Spleen (tissue), 13 donors: ENCODE measurements at regions of chr1 and their contacts with region 1.

Region 1: GRCh38 chr1:205325334-205325884 is 3.9 kb upstream of the NUAK2 start:
- DNase-seq: no peak
- H3K4me3 ChIP-seq: no peak overlapping the region
- H3K27ac ChIP-seq: peak overlapping the region in 2 of 8 donors; percentile 23 to 45
- H3K4me1 ChIP-seq: peaks cover 9 to 44% (median 28%) of the 10 kb centered on the region in 6 donors
- H3K27me3 ChIP-seq: peaks cover 0 to 12% (median 0%) of the 10 kb centered on the region in 7 donors
- CTCF ChIP-seq: peak; percentile 62 to 93 (median 83)
- POLR2A ChIP-seq: no peak

Region 2: DNA sequence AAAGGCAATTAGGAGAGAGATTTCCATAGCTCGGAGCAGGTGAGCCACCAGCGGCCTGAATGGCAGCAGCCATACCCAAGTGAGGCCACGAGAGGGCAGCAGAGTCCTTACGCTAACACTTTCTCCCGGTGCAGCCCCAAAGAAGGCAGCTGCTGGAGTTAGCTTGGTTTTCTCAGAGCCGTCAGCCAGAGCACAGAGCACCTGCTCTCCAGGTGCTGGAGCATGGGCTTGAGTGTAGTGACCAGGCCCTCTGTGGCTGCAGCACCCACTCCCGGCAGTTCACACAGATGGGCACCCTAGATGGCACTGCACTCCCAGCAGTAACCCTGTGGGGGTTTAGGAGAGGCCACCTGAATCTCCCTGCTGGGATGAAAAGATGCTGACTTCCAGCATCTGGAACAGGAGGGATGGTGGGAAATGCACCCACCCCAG is 51.8 kb before region 1 on chr1:
- intact Hi-C with region 1: loop called (anchors 2 kb)
- DNase-seq: peak; percentile 95
- H3K4me3 ChIP-seq: peak overlapping the region in 1 of 8 donors; percentile 37
- H3K27ac ChIP-seq: peak overlapping the region in 3 of 8 donors; percentile 11 to 66 (median 33)
- H3K4me1 ChIP-seq: peaks cover 5 to 61% (median 28%) of the 10 kb centered on the region in 6 donors
- H3K27me3 ChIP-seq: no peaks in the 10 kb centered on the region
- CTCF ChIP-seq: peak; percentile 97 to 99 (median 99)
- POLR2A ChIP-seq: no peak